Endothelial cell of umbilical vein (primary cell): ENCODE measurements at regions of chr1 and their contacts with region 1.

Region 1: DNA sequence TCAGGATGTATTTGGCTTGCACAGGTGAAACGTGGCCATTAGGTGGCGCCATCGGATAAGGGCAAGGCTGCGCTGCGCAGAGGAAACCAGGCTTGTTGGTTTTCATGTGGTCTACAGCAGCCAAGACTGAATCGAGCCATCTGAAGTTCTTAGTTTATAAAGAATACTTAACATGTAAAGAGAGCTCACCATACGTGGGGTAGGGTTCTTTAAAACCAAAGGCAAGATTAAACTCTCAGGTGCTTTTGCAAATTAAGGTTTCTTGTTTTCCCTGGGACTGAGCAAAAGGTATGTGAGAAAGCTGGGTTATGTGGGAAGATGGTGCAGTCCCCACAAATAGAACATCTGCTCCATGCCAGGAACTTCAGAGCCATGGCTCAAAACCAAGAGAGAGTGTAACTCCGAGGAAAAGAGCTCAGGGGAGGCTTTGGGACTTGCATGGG is 9.3 kb downstream of the MASP2 start:
- DNase-seq: peak; percentile 87
- H3K4me3 ChIP-seq: no peak overlapping the region
- H3K27ac ChIP-seq: no peak overlapping the region
- H3K4me1 ChIP-seq: no peaks in the 10 kb centered on the region
- H3K27me3 ChIP-seq: no peaks in the 10 kb centered on the region
- CTCF ChIP-seq: peak; percentile 94
- POLR2A ChIP-seq: no peak

Region 2: DNA sequence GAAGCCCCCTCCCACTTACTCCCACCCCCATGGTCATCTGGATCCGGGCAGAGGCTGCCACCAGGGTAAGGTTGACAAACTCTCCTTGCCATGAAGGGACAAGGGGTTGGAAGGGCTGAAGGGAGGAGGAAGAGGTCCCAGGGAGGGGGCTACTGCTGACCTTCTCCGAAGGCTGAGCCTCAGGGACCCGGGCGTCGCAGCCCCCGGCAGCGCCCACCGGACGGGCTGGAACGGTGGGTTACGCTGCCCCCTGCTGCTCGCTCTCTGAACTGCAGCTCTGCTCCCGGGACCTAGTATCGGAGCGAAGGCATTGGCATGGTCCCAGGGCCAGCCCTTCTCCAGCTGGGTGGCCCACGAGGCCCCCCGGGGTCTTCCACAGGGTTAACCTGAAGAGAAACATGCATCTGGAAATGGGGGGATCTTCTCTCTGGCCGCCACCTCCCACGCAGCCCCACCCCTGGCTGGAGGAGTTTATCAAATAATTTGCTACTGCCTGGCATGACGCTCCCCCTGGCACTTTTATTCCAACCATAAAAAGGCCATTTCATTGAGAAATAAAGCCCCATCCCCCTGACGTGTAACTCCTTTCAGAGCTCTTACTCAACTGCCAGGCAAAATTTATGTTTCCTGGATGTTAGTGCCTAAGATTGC is 95.7 kb before region 1 on chr1:
- CTCF ChIA-PET with region 1: no interaction called
- POLR2A ChIA-PET with region 1: no interaction called
- dilution Hi-C with region 1: no loop called
- intact Hi-C with region 1: no loop called
- DNase-seq: peak; percentile 22
- H3K4me3 ChIP-seq: no peak overlapping the region
- H3K27ac ChIP-seq: no peak overlapping the region
- H3K4me1 ChIP-seq: no peaks in the 10 kb centered on the region
- H3K27me3 ChIP-seq: peaks cover 8 to 9% of the 10 kb centered on the region in 2 experiments
- CTCF ChIP-seq: peak; percentile 91 to 98
- POLR2A ChIP-seq: no peak

Region 3: DNA sequence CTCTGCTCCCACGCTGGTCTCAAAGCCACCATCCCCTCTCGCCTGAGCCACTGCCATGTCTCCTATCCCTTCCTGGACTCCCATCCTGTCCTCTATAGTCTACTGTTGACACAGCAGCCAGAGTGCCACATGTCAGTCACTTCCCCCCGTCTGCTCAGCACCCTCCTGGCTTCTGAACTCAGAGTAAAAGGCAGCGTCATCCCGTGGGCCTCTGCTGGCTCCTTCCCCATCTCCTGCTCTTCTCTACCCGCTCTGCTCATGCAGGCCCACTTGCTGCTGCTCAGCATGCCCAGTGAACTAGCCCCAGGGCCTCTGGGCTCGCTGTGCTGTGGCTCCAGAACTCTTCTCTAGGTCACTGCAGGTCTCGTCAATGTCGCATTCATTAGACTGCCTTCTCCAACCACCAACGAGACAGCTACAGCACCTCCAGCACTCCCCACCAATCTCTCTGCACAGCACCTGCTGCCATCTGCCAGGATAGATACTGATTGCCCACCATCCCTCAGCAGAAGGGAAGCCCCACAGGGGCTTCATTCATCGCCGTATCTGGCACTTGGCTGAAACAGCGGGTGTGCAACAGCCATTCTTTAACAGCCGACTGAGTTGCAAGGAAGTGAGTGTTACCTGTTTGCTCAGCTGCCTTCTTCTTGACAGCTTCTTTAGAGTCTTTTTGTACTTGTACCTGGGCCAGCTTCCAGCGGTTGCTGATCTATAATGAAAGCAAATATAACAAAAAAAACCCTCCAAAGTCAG is 33.9 kb after region 1 on chr1:
- CTCF ChIA-PET with region 1: interaction called, 19 read pairs
- POLR2A ChIA-PET with region 1: no interaction called
- dilution Hi-C with region 1: no loop called
- intact Hi-C with region 1: no loop called
- DNase-seq: no peak
- H3K4me3 ChIP-seq: no peak overlapping the region
- H3K27ac ChIP-seq: no peak overlapping the region
- H3K4me1 ChIP-seq: no peaks in the 10 kb centered on the region
- H3K27me3 ChIP-seq: no peaks in the 10 kb centered on the region
- CTCF ChIP-seq: no peak
- POLR2A ChIP-seq: no peak

Region 4: GRCh38 chr1:11109047-11109760 is 71.4 kb after region 1 on chr1:
- CTCF ChIA-PET with region 1: interaction called, 11 read pairs
- POLR2A ChIA-PET with region 1: no interaction called
- dilution Hi-C with region 1: no loop called
- intact Hi-C with region 1: no loop called
- DNase-seq: no peak
- H3K4me3 ChIP-seq: no peak overlapping the region
- H3K27ac ChIP-seq: no peak overlapping the region
- H3K4me1 ChIP-seq: no peaks in the 10 kb centered on the region
- H3K27me3 ChIP-seq: no peaks in the 10 kb centered on the region
- CTCF ChIP-seq: no peak
- POLR2A ChIP-seq: no peak

Region 5: GRCh38 chr1:11227106-11228077 is 189.6 kb after region 1 on chr1:
- CTCF ChIA-PET with region 1: interaction called, 12 read pairs
- POLR2A ChIA-PET with region 1: no interaction called
- dilution Hi-C with region 1: no loop called
- intact Hi-C with region 1: no loop called
- DNase-seq: no peak
- H3K4me3 ChIP-seq: no peak overlapping the region
- H3K27ac ChIP-seq: no peak overlapping the region
- H3K4me1 ChIP-seq: no peaks in the 10 kb centered on the region
- H3K27me3 ChIP-seq: no peaks in the 10 kb centered on the region
- CTCF ChIP-seq: no peak
- POLR2A ChIP-seq: no peak

Region 6: DNA sequence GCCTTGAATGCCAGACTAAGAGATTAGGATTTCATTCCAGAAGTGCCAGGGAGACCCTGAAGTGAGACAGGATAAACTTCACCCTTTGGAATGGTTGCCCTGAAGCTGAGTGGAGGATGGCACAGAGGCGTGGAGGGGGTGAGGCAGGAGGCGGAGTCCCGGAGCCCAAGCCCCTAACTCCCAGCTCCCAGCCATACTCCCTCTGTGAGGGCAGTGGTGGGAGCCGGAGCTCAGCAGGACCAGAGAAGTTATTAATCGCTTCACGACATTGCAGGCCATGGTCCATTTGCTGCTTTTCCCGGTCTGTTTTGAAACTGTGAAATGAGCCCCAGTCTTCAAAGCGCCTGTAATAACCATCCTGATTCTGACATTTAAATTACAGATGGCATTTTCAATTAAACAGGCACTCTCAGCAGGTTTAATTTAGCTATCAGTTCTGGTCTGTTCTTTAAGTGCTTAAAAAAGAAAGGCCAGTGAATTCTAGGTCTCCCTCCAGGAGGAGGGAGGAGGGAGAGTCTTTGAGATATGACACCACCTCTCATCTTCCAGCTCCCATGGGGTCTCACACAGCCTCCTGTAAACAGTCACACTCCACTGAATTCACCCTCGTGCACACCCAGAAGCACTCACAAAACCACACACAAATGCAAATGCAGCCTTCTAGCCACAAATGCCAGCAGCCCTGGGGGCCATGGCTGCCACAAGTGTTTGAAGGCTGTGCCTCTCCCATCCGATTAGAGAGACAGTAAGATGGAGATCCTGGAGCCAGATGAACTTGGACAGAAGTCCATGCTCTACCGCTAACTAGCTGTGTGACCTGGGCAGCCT is 596.8 kb after region 1 on chr1:
- CTCF ChIA-PET with region 1: interaction called, 19 read pairs
- POLR2A ChIA-PET with region 1: no interaction called
- dilution Hi-C with region 1: no loop called
- intact Hi-C with region 1: no loop called
- DNase-seq: no peak
- H3K4me3 ChIP-seq: no peak overlapping the region
- H3K27ac ChIP-seq: no peak overlapping the region
- H3K4me1 ChIP-seq: no peaks in the 10 kb centered on the region
- H3K27me3 ChIP-seq: no peaks in the 10 kb centered on the region
- CTCF ChIP-seq: no peak
- POLR2A ChIP-seq: no peak

Region 7: GRCh38 chr1:11707621-11708276 is 670.0 kb after region 1 on chr1:
- CTCF ChIA-PET with region 1: interaction called, 21 read pairs
- POLR2A ChIA-PET with region 1: no interaction called
- dilution Hi-C with region 1: no loop called
- intact Hi-C with region 1: no loop called
- DNase-seq: no peak
- H3K4me3 ChIP-seq: no peak overlapping the region
- H3K27ac ChIP-seq: no peak overlapping the region
- H3K4me1 ChIP-seq: no peaks in the 10 kb centered on the region
- H3K27me3 ChIP-seq: peaks cover 4 to 16% of the 10 kb centered on the region in 2 experiments
- CTCF ChIP-seq: no peak
- POLR2A ChIP-seq: no peak